MCF 10A (cell line): ENCODE measurements at regions of chr1 and their contacts with region 1.

Region 1: GRCh38 chr1:246566128-246566812 is at the starts of genes CNST and TFB2M:
- DNase-seq: peak; percentile 100
- H3K4me3 Mint-ChIP-seq: peak within 1 kb of the TSS; percentile 93
- H3K27ac Mint-ChIP-seq: peak within 1 kb of the TSS; percentile 97
- H3K4me1 Mint-ChIP-seq: peaks cover 34% of the 10 kb centered on the region
- H3K27me3 Mint-ChIP-seq: no peaks in the 10 kb centered on the region
- CTCF ChIP-seq: no peak
- total RNA-seq, gene CNST: 44.8 and 48.3 TPM in 2 replicates
- total RNA-seq, gene TFB2M: 38.3 and 52.0 TPM in 2 replicates

Region 2: DNA sequence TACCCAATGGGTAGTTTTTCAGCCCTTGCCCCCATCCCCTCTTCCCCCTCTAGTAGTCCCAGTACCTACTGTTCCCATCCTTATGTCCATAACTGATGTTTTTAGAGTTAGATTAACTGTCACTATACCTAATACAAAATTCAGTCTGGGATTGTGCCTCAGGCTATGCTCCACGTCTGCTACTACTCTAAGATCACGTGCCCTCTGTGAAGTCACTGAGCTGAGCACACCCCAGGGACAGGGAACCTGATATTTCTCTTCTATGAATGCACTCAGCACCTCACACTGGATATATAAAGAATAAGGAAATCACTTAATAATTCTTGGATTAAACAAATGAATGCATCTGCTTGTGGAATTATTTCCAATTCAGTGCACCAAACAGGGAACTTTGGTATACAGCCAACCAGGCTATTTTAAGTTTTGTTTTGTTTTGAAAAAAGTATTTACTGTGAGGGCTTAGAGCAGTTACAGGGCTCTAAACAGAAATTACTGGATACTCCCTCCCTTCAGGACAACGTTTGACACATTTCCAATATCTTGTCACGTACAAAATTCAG is 367.1 kb before region 1 on chr1:
- CTCF ChIA-PET with region 1: no interaction called
- POLR2A ChIA-PET with region 1: no interaction called
- intact Hi-C with region 1: no loop called
- DNase-seq: no peak
- H3K4me3 Mint-ChIP-seq: no peak overlapping the region
- H3K27ac Mint-ChIP-seq: no peak overlapping the region
- H3K4me1 Mint-ChIP-seq: no peaks in the 10 kb centered on the region
- H3K27me3 Mint-ChIP-seq: no peaks in the 10 kb centered on the region
- CTCF ChIP-seq: no peak

Region 3: DNA sequence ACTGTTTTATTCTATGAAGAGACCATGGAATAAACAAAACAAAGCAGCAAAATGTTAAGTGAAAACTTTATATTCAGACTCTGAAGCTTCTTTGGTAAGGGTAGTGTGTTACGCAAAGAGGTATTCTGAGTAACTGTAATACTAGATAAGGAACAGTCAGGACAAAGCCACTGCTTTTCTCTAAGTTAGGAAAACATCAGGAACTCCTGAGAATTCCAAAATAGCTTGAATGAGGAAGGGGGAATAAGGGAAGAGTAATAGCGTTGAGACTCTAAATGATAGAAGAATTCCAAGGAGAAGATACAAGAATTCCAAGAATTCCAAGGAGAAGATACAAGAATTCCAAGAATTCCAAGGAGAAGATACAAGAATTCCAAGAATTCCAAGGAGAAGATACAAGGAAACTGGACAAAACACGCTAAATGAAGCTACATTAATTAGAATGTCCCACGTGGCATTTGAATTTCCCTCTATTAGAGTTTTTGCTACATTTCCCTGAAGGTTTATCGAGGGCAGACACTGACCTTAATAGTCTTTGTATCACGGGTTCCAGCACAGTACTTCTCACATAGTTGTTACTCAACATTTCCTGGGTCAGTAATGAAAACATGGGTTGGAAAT is 130.7 kb before region 1 on chr1:
- CTCF ChIA-PET with region 1: no interaction called
- POLR2A ChIA-PET with region 1: no interaction called
- intact Hi-C with region 1: no loop called
- DNase-seq: peak; percentile 41
- H3K4me3 Mint-ChIP-seq: no peak overlapping the region
- H3K27ac Mint-ChIP-seq: peak overlapping the region; percentile 7
- H3K4me1 Mint-ChIP-seq: peaks cover 6% of the 10 kb centered on the region
- H3K27me3 Mint-ChIP-seq: no peaks in the 10 kb centered on the region
- CTCF ChIP-seq: no peak

Region 4: GRCh38 chr1:246450611-246451251 is 115.5 kb before region 1 on chr1:
- CTCF ChIA-PET with region 1: no interaction called
- POLR2A ChIA-PET with region 1: no interaction called
- intact Hi-C with region 1: no loop called
- DNase-seq: peak; percentile 61
- H3K4me3 Mint-ChIP-seq: no peak overlapping the region
- H3K27ac Mint-ChIP-seq: no peak overlapping the region
- H3K4me1 Mint-ChIP-seq: no peaks in the 10 kb centered on the region
- H3K27me3 Mint-ChIP-seq: no peaks in the 10 kb centered on the region
- CTCF ChIP-seq: peak; percentile 98

Region 5: DNA sequence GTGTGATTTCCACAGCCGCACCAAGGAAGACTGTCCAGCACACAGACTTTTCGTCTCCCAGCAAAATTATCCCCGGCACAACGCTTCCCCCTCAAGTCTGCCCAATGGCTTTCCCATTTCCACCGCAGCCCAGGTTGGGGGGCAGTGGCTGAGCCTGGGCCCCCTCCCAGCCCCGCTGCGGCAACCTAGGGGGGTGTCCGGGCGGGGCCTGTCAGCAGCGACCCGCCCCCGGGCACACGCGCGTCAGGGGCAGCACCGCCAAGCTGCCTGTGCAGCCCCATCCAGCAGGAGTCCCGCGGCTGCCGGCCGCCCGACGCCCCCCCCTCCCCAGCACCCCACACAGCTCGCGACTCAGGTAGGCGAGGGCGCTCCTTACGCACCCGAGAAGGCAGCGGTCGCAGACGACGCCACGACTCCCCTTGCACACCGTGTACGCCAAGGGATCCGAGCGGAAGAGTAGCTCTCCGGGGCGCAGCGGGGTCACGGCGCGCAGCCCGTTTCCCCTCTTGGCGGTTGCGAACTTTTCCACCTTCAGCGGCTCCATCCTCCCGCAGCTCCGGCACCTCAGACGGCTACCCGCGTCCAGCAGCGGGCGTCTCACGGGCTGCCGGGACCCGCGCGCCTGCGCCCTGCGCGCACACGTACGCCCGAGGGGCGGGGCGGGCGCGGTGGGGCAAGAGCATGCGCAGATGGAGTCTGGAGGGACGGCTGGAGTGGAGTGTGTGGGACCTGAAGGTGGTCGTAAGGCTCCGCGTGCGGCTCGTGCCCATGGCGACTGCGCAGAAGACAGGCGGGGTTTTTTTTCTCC is 59.4 kb before region 1 on chr1 and contains the start of gene SMYD3:
- CTCF ChIA-PET with region 1: interaction called, 4 read pairs
- POLR2A ChIA-PET with region 1: interaction called, 31 read pairs
- intact Hi-C with region 1: no loop called
- DNase-seq: peak; percentile 89
- H3K4me3 Mint-ChIP-seq: peak within 1 kb of the TSS; percentile 76
- H3K27ac Mint-ChIP-seq: peak within 1 kb of the TSS; percentile 18
- H3K4me1 Mint-ChIP-seq: peaks cover 35% of the 10 kb centered on the region
- H3K27me3 Mint-ChIP-seq: no peaks in the 10 kb centered on the region
- CTCF ChIP-seq: no peak
- total RNA-seq, gene SMYD3: 21.4 and 26.9 TPM in 2 replicates

Region 6: DNA sequence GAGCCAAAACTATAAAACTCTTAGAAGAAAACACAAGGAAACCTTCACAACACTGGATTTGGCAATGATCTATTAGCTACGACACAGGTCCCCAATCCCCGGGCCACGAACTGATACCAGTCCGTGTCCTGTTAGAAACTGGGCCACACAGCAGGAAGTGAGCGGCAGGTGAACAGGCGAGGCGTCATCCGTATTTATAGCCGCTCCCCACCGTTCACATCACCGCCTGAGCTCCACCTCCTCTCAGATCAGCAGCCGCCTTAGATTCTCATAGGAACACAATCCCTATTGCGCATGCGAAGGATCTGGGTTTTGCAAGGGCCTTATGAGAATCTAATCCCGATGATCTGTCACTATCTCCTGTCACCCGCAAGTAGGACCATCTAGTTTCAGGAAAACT is 12.1 kb before region 1 on chr1:
- CTCF ChIA-PET with region 1: interaction called, 4 read pairs
- POLR2A ChIA-PET with region 1: interaction called, 26 read pairs
- intact Hi-C with region 1: no loop called
- DNase-seq: no peak
- H3K4me3 Mint-ChIP-seq: no peak overlapping the region
- H3K27ac Mint-ChIP-seq: no peak overlapping the region
- H3K4me1 Mint-ChIP-seq: peaks cover 10% of the 10 kb centered on the region
- H3K27me3 Mint-ChIP-seq: no peaks in the 10 kb centered on the region
- CTCF ChIP-seq: no peak

Region 7: DNA sequence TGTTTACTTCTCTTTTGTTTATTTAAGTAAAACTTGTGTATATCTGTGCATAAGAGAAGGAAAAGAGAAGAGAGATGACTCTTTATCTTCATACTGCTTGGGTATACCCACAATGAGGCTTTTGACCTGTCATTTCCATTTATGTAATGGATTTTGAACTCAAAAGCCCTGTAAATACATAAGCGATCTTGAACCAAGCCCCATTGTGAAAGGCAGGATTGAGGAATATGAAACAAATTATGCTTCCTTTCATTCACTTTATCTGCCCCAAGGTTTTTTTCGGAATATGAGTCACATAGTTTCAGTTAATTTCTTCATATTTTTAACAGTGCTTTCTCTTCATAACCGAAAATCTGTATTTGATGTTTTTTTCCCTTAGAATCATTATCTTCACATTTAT is 21.3 kb after region 1 on chr1:
- CTCF ChIA-PET with region 1: interaction called, 6 read pairs
- POLR2A ChIA-PET with region 1: interaction called, 43 read pairs
- intact Hi-C with region 1: loop called (anchors 1 kb)
- DNase-seq: peak; percentile 81
- H3K4me3 Mint-ChIP-seq: peak overlapping the region; percentile 28
- H3K27ac Mint-ChIP-seq: peak overlapping the region; percentile 82
- H3K4me1 Mint-ChIP-seq: peaks cover 28% of the 10 kb centered on the region
- H3K27me3 Mint-ChIP-seq: no peaks in the 10 kb centered on the region
- CTCF ChIP-seq: no peak

Region 8: GRCh38 chr1:246608616-246609376 is 42.5 kb after region 1 on chr1:
- CTCF ChIA-PET with region 1: interaction called, 3 read pairs
- POLR2A ChIA-PET with region 1: interaction called, 50 read pairs
- intact Hi-C with region 1: loop called (anchors 1 kb)
- DNase-seq: peak; percentile 99
- H3K4me3 Mint-ChIP-seq: peak overlapping the region; percentile 66
- H3K27ac Mint-ChIP-seq: peak overlapping the region; percentile 95
- H3K4me1 Mint-ChIP-seq: peaks cover 39% of the 10 kb centered on the region
- H3K27me3 Mint-ChIP-seq: no peaks in the 10 kb centered on the region
- CTCF ChIP-seq: no peak

Region 9: GRCh38 chr1:246622035-246622652 is 55.9 kb after region 1 on chr1:
- CTCF ChIA-PET with region 1: no interaction called
- POLR2A ChIA-PET with region 1: no interaction called
- intact Hi-C with region 1: no loop called
- DNase-seq: no peak
- H3K4me3 Mint-ChIP-seq: no peak overlapping the region
- H3K27ac Mint-ChIP-seq: no peak overlapping the region
- H3K4me1 Mint-ChIP-seq: peaks cover 4% of the 10 kb centered on the region
- H3K27me3 Mint-ChIP-seq: no peaks in the 10 kb centered on the region
- CTCF ChIP-seq: no peak

Region 10: GRCh38 chr1:246773213-246773641 is 207.0 kb after region 1 on chr1:
- CTCF ChIA-PET with region 1: no interaction called
- POLR2A ChIA-PET with region 1: interaction called, 7 read pairs
- intact Hi-C with region 1: loop called (anchors 5 kb)
- DNase-seq: no peak
- H3K4me3 Mint-ChIP-seq: no peak overlapping the region
- H3K27ac Mint-ChIP-seq: peak overlapping the region; percentile 36
- H3K4me1 Mint-ChIP-seq: peaks cover 18% of the 10 kb centered on the region
- H3K27me3 Mint-ChIP-seq: no peaks in the 10 kb centered on the region
- CTCF ChIP-seq: no peak